Activated CD4-positive, alpha-beta memory T cell treated with anti-CD3 and anti-CD28 coated beads, Interleukin-2, amount 10 ng/mL, durations not matched to agents 7 days and 5 days (primary cell): ENCODE measurements at regions of chr4 and their contacts with region 1.

Region 1: GRCh38 chr4:152559641-152560040 is 23.7 kb upstream of the FBXW7 start:
- DNase-seq: no peak
- H3K4me3 Mint-ChIP-seq: no peak overlapping the region
- H3K27ac Mint-ChIP-seq: no peak overlapping the region
- H3K4me1 Mint-ChIP-seq: peaks cover 30% of the 10 kb centered on the region
- H3K27me3 Mint-ChIP-seq: peaks cover 1% of the 10 kb centered on the region

Region 2: GRCh38 chr4:152436384-152436783 is 123.3 kb before region 1 on chr4:
- CTCF ChIA-PET with region 1: no interaction called
- POLR2A ChIA-PET with region 1: no interaction called
- DNase-seq: no peak
- H3K4me3 Mint-ChIP-seq: no peak overlapping the region
- H3K27ac Mint-ChIP-seq: no peak overlapping the region
- H3K4me1 Mint-ChIP-seq: peaks cover 12% of the 10 kb centered on the region
- H3K27me3 Mint-ChIP-seq: no peaks in the 10 kb centered on the region

Region 3: GRCh38 chr4:152525873-152526272 is 33.8 kb before region 1 on chr4:
- CTCF ChIA-PET with region 1: interaction called, 3 read pairs
- POLR2A ChIA-PET with region 1: interaction called, 10 read pairs
- DNase-seq: no peak
- H3K4me3 Mint-ChIP-seq: no peak overlapping the region
- H3K27ac Mint-ChIP-seq: no peak overlapping the region
- H3K4me1 Mint-ChIP-seq: peaks cover 63% of the 10 kb centered on the region
- H3K27me3 Mint-ChIP-seq: no peaks in the 10 kb centered on the region

Region 4: DNA sequence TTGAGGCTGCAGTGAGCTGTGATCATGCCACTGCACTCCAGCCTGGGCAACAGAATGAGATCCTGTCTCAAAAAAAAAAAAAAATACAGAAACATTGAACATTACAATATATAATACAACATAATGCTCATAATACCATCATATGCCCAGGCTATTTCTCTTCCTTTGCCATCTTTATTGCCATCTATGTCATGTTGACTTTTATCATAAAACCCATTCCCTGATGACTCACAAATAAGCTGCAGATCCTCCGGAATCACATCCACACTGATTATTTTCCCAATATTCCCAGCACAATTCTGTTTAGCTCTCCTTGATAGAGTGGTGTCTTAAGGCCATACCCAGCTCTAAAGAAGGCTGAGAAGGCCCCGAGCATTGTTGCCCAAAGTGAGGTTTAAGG is 14.6 kb before region 1 on chr4:
- CTCF ChIA-PET with region 1: interaction called, 4 read pairs
- POLR2A ChIA-PET with region 1: interaction called, 266 read pairs
- DNase-seq: no peak
- H3K4me3 Mint-ChIP-seq: no peak overlapping the region
- H3K27ac Mint-ChIP-seq: no peak overlapping the region
- H3K4me1 Mint-ChIP-seq: peaks cover 8% of the 10 kb centered on the region
- H3K27me3 Mint-ChIP-seq: no peaks in the 10 kb centered on the region

Region 5: GRCh38 chr4:152591396-152591795 is 31.8 kb after region 1 on chr4:
- CTCF ChIA-PET with region 1: no interaction called
- POLR2A ChIA-PET with region 1: no interaction called
- DNase-seq: peak; percentile 24
- H3K4me3 Mint-ChIP-seq: no peak overlapping the region
- H3K27ac Mint-ChIP-seq: no peak overlapping the region
- H3K4me1 Mint-ChIP-seq: peaks cover 2% of the 10 kb centered on the region
- H3K27me3 Mint-ChIP-seq: no peaks in the 10 kb centered on the region

Region 6: DNA sequence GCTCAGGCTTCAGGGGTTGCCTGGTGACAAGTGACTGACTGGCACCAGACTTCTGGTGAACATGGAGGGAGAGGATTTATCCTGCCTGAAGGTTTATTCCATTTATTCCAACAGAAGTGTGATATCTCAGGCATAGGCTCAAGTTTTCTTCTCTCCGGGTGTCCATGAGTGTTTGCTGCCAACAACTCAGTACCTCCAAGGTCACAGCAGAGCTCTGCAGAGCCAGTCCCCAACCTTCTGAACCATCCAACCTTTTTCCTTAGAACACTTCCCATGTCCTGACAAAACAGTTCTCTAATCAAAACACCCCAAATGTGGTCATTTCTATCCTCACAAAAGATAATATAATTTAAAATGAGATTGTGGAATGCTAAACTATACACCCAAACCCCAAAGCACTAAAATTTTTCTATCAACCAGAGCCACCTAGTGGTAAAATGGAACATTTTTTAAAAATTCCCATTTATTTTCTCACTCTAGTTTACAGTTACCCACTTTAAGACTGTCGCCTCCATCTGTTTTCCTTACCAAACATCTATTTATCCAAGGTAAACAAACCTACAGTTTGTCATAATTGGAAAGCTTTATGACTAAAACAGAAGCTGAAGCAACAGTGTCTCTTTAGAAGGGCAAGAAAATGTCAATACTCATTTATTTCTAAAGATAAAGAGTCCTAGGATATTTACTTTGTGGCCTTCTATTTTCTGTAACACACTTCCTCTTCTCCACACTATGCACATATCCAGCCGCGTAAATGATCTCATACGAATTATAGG is 80.6 kb after region 1 on chr4:
- CTCF ChIA-PET with region 1: interaction called, 14 read pairs
- POLR2A ChIA-PET with region 1: no interaction called
- DNase-seq: no peak
- H3K4me3 Mint-ChIP-seq: no peak overlapping the region
- H3K27ac Mint-ChIP-seq: no peak overlapping the region
- H3K4me1 Mint-ChIP-seq: peaks cover 42% of the 10 kb centered on the region
- H3K27me3 Mint-ChIP-seq: no peaks in the 10 kb centered on the region

Region 7: GRCh38 chr4:152663203-152664066 is 103.8 kb after region 1 on chr4:
- CTCF ChIA-PET with region 1: no interaction called
- POLR2A ChIA-PET with region 1: no interaction called
- DNase-seq: no peak
- H3K4me3 Mint-ChIP-seq: no peak overlapping the region
- H3K27ac Mint-ChIP-seq: peak overlapping the region; percentile 33
- H3K4me1 Mint-ChIP-seq: peaks cover 34% of the 10 kb centered on the region
- H3K27me3 Mint-ChIP-seq: no peaks in the 10 kb centered on the region